HCT116 (cell line): ENCODE measurements at regions of chr18 and their contacts with region 1.

Region 1: DNA sequence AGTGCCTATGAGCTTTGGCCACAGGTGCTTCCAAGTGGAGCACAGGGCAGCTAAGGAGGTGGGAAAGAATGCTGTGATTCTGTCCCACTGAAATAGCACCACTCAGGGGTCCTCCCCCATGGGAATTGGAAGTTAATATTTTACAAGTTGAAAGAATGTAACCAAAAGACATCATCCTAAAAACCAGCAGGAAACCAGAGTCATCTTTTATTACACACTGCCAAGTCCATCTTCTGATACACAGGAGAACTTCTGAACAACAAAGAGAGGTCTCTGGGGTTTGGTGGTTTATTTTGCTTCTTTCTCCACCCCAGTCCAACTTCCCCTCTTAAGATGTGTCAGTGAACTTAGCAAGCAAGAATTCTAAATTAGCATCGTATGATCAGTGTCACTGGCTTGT is 47.7 kb downstream of the COLEC12 start:
- DNase-seq: no peak
- ATAC-seq: no peak
- H3K4me3 ChIP-seq: no peak overlapping the region
- H3K27ac ChIP-seq: no peak overlapping the region
- H3K4me1 ChIP-seq: peaks cover 0 to 10% of the 10 kb centered on the region in 2 experiments; a peak in 2 of 4 replicates
- H3K27me3 ChIP-seq: peaks cover 15% of the 10 kb centered on the region; the same call in 1 of the 2 replicates
- CTCF ChIP-seq: no peak
- POLR2A ChIP-seq: no peak
- RAD21 ChIP-seq: no peak

Region 2: DNA sequence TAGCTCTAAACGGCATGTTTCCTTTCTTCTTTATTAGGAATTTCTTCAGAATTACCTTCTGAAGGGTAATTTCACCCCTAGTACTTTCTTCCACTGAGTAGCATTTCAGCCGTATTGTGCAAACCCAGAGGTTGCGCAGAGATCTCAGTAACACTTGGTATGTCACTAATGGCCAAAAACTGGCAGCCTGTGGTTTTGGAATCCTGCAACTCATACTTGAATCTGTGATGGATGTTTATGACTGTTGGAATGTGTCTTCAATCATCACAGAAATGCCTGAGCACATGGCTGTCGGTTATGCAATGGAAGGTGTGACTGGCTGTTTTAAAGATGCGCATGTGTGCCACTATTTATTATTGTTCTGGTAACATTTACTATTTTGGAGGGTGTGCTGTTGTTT is 52.4 kb before region 1 on chr18:
- CTCF ChIA-PET with region 1: no interaction called
- POLR2A ChIA-PET with region 1: no interaction called
- RAD21 ChIA-PET with region 1: no interaction called
- intact Hi-C with region 1: loop called (anchors 5 kb)
- DNase-seq: no peak
- ATAC-seq: no peak
- H3K4me3 ChIP-seq: no peak overlapping the region
- H3K27ac ChIP-seq: no peak overlapping the region
- H3K4me1 ChIP-seq: no peaks in the 10 kb centered on the region
- H3K27me3 ChIP-seq: 0 out of 2 replicates have a peak, but pooled peaks cover 6% of the 10 kb centered on the region
- CTCF ChIP-seq: no peak
- POLR2A ChIP-seq: no peak
- RAD21 ChIP-seq: no peak